Esophagus squamous epithelium (tissue), 5 donors: ENCODE measurements at regions of chr14 and their contacts with region 1.

Region 1: DNA sequence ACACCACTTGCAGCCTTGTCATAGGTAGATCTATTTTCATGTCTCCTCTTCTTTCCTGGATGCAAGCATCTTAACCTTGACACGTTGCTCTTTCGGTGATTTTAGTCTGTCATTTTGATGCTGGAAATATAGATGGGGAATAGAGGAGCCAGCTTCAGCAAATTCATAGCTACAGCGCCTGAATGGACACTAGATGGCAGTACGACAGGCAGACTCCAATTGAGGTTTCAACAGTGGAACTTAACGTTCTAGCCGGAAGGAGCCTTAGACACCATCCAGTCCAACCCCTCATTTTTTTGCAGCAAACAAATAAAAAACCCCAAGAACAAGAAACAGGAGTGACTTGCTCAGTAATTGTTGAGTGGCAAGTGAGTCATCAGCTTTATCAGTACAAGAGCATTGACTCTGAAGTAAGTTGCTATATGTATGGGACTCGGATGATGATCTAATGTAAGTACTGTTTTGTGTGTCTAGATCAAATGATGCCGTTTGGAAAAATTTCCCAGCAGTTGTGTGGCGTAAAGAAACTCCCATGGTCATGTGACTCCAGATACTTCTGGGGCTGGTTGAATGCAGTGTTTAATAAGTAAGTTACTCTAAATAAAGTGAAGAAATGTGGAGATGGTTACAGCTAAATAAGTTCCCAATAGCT is 9.0 kb downstream of the DMAC2L start:
- DNase-seq: no peak
- H3K4me3 ChIP-seq: peak overlapping the region in 2 of 4 donors; percentile 26 to 54
- H3K27ac ChIP-seq: peak overlapping the region; percentile 71 to 87 (median 81)
- H3K4me1 ChIP-seq: peaks cover 6 to 45% (median 27%) of the 10 kb centered on the region in 3 donors
- H3K27me3 ChIP-seq: no peaks in the 10 kb centered on the region
- CTCF ChIP-seq: peak; percentile 78 to 90 (median 82)
- POLR2A ChIP-seq: no peak

Region 2: DNA sequence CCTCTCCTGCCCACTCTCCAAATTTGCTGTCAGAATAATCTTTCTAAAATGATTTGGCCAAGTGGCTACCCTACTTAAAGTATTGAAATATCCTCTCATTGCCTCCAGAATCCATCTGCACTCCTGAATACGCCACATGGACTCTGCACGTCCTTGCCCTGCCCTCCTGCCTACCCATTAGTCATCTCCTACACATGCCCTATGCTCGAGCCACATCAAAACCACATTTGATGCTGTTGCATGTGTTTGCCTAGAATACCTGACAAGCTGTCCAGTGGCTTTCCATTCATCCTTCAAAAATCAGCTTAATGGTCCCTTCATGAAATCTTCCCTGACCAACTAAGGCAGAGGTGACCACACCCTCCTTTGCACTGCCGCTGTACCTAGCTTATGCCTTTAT is 221.8 kb before region 1 on chr14:
- intact Hi-C with region 1: no loop called
- DNase-seq: no peak
- H3K4me3 ChIP-seq: no peak overlapping the region
- H3K27ac ChIP-seq: no peak overlapping the region
- H3K4me1 ChIP-seq: peaks cover 0 to 20% (median 0%) of the 10 kb centered on the region in 3 donors
- H3K27me3 ChIP-seq: no peaks in the 10 kb centered on the region
- CTCF ChIP-seq: no peak
- POLR2A ChIP-seq: no peak

Region 3: DNA sequence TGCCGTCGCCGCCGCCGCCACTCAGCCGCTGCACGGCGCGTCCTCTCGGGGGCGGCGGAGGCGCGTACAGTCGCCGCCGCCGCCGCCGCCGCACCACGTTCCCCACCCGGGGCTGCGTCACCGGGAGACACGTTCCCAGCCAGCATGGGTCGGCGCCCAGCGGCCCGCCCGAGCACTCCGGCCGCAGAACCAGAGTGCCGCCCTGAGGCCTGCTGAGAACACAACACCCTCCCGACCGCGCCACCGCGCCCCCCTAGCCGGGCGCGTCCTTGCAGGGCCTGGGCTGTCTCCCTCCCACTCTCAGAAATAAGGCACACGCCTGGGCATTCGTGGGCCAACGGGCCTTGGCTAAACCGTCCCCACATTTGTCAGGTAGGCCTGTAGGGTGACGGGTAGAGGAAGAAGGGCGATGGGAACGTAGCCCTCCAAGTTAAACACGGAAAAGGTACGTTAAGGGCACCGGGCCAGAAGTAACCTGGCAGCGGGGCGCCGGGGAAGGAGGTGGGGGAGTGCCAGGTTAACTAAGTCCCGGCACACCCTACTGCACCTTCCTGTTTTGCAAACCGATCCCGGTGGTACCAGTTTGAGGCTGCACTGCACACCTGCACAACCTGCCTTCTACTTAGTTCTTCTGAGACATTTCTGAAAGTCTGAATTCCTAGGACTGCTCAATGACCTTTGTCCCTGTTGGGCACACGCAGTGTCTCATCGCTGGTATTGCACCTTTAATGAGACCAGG is 211.5 kb after region 1 on chr14 and contains the start of gene MAP4K5:
- intact Hi-C with region 1: loop called (anchors 5 kb)
- DNase-seq: peak; percentile 61
- H3K4me3 ChIP-seq: peak within 1 kb of the TSS; percentile 78 to 92 (median 88)
- H3K27ac ChIP-seq: peak within 1 kb of the TSS; percentile 96 to 98 (median 97)
- H3K4me1 ChIP-seq: peaks cover 10 to 59% (median 21%) of the 10 kb centered on the region in 3 donors
- H3K27me3 ChIP-seq: no peaks in the 10 kb centered on the region
- CTCF ChIP-seq: peak; percentile 67 to 96 (median 88)
- POLR2A ChIP-seq: peak in 2 of 4 donors; percentile 86
- total RNA-seq, gene MAP4K5: 73.6 to 143 (median 124) TPM